SK-N-SH (cell line): ENCODE measurements at regions of chr22 and their contacts with region 1.

Region 1: GRCh38 chr22:46116491-46116958 is 33.8 kb upstream of the PPARA start:
- DNase-seq: peak; percentile 99
- H3K4me3 ChIP-seq: peak overlapping the region in 1 of 2 experiments; percentile 47; a peak in 1 of 4 replicates
- H3K27ac ChIP-seq: peak overlapping the region; percentile 63 to 70
- H3K4me1 ChIP-seq: peaks cover 0 to 74% of the 10 kb centered on the region in 2 experiments; a peak in 2 of 4 replicates
- H3K27me3 ChIP-seq: no peaks in the 10 kb centered on the region
- CTCF ChIP-seq: peak; percentile 73
- EP300 ChIP-seq: no peak
- RAD21 ChIP-seq: peak; percentile 80

Region 2: GRCh38 chr22:45831394-45831793 is 285.1 kb before region 1 on chr22:
- CTCF ChIA-PET with region 1: no interaction called
- POLR2A ChIA-PET with region 1: no interaction called
- DNase-seq: no peak
- H3K4me3 ChIP-seq: no peak overlapping the region
- H3K27ac ChIP-seq: no peak overlapping the region
- H3K4me1 ChIP-seq: no peaks in the 10 kb centered on the region; a peak in 1 of 4 replicates
- H3K27me3 ChIP-seq: no peaks in the 10 kb centered on the region
- CTCF ChIP-seq: peak; percentile 53
- EP300 ChIP-seq: no peak
- RAD21 ChIP-seq: peak; percentile 50

Region 3: DNA sequence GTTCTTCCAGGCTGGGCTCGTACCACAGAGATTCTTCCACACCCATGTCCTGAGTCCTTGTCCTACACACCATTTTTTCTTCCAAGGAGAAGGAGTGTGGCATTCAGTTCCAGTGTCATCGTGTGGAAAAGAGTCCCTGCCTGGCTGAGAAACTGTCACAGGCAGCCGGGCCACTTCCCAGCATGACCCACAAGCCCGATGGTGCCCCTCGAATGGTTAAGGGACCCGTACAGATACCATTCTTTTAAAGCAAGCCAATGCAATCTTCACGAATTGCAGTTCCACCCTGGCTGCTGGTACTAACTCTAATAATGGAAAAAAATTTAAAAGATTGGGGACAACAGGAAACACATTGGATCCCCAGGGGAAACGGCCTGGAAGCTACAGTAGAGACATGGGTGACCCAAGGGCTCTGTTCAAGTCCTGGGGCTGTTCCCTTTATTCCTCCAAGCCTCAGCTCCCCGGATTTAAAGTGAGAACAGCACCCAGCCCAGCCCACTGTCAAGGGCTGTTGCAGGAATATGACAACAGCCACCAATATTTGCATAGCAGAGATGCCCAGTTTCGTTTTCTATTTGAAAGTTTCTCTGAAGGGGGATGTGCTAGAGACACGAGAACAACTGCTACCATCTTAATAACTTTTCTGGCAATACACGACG is 58.6 kb before region 1 on chr22:
- CTCF ChIA-PET with region 1: interaction called, 12 read pairs
- POLR2A ChIA-PET with region 1: no interaction called
- DNase-seq: peak; percentile 58
- H3K4me3 ChIP-seq: peak overlapping the region; percentile 67 to 68
- H3K27ac ChIP-seq: peak overlapping the region; percentile 94 to 100
- H3K4me1 ChIP-seq: peaks cover 42 to 66% of the 10 kb centered on the region in 2 experiments
- H3K27me3 ChIP-seq: no peaks in the 10 kb centered on the region
- CTCF ChIP-seq: no peak
- EP300 ChIP-seq: no peak
- RAD21 ChIP-seq: no peak

Region 4: GRCh38 chr22:46071451-46072109 is 44.9 kb before region 1 on chr22:
- CTCF ChIA-PET with region 1: interaction called, 73 read pairs
- POLR2A ChIA-PET with region 1: interaction called, 11 read pairs
- DNase-seq: peak; percentile 88
- H3K4me3 ChIP-seq: peak overlapping the region; percentile 90 to 92
- H3K27ac ChIP-seq: peak overlapping the region; percentile 96 to 100
- H3K4me1 ChIP-seq: peaks cover 6 to 33% of the 10 kb centered on the region in 2 experiments; a peak in 3 of 4 replicates
- H3K27me3 ChIP-seq: no peaks in the 10 kb centered on the region
- CTCF ChIP-seq: no peak
- EP300 ChIP-seq: peak; percentile 15 to 57; a peak in 1 of 4 replicates
- RAD21 ChIP-seq: no peak; the same call in 1 of the 2 replicates

Region 5: DNA sequence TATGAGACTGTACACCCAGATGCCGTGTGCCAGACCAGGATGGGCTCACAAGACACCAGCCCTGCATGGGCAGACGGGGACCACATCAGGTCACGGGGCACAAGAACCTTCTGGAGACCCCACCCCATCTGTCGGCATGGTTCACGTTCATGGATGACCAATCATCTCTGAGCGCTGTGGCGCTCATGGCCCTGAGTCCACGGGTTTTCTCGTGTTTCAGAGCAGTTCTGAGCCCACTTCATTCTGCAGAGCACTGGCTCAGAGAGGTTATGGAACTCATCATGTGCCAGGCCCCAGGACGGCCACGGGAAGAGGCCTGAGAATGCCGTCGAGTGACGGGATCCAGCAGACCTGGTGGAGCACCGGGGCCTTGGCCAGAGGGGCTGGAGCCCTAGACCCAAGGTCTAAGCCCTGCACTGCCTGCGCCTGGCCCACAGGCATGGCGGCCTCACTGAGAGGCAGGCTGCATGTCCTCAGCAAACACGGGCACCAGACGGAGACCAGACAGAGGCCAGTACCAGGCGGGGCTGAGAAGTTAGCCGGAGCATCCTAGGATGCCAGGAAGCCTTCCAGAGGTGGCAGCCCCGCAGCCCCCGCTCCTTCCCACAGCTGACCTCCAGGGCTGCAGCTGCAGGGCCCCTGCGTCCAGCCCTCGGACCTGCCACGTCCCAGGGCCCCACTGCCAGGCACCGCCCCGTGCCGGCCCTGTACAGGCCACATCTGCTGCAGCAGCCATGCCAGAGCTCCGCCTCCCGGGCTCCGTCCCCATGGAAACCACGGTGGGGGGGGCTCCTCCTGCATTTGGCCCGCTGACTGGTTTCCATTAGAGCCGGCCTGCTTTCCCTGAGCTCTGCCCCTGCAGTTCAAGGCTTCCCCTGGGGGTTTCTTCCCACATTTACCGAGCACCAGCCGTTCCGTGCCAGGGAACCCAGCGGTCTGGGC is 28.9 kb before region 1 on chr22:
- CTCF ChIA-PET with region 1: interaction called, 73 read pairs
- POLR2A ChIA-PET with region 1: interaction called, 6 read pairs
- DNase-seq: peak; percentile 94
- H3K4me3 ChIP-seq: peak overlapping the region; percentile 90 to 92
- H3K27ac ChIP-seq: peak overlapping the region; percentile 96 to 100
- H3K4me1 ChIP-seq: peaks cover 41 to 97% of the 10 kb centered on the region in 2 experiments
- H3K27me3 ChIP-seq: no peaks in the 10 kb centered on the region
- CTCF ChIP-seq: no peak
- EP300 ChIP-seq: peak; percentile 21 to 48; a peak in 3 of 4 replicates
- RAD21 ChIP-seq: peak; percentile 17

Region 6: GRCh38 chr22:46309526-46310085 is 193.1 kb after region 1 on chr22:
- CTCF ChIA-PET with region 1: interaction called, 69 read pairs
- POLR2A ChIA-PET with region 1: no interaction called
- DNase-seq: no peak
- H3K4me3 ChIP-seq: no peak overlapping the region
- H3K27ac ChIP-seq: no peak overlapping the region
- H3K4me1 ChIP-seq: no peaks in the 10 kb centered on the region; a peak in 1 of 4 replicates
- H3K27me3 ChIP-seq: no peaks in the 10 kb centered on the region
- CTCF ChIP-seq: no peak
- EP300 ChIP-seq: no peak
- RAD21 ChIP-seq: no peak